Psoas muscle (tissue), 8 donors: ENCODE measurements at regions of chr14 and their contacts with region 1.

Region 1: DNA sequence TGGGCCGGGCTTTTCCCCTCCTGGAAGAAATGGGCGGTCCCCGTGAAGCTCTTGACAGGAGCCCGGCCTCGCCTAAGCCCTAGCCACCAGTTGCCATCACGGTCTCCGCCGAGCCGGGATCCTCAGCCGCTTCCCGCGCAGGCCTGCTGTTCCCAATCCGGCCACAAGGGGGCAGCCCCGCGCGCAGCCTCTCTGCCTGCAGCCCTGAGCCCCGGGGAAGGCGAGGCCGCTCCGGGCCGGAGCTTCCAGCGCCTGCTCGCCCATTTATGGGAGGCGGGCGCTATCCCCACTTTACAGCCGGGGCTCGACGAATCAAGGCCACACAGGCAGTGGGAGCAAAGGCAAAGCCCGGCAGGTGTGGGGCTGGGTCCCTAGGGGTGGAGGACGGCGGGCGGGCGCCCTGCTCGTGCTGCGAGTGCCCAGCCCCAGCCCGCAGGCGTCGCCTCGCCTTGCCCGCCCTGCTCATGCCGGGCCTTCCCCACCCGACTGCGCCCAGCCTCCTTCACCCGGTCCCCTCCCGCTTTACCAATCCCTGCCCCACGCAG is 61.5 kb downstream of the LGMN start:
- DNase-seq: peak; percentile 77 to 80
- ATAC-seq: peak; percentile 77 to 90 (median 84)
- H3K4me3 ChIP-seq: peak overlapping the region; percentile 49
- H3K27ac ChIP-seq: no peak overlapping the region
- H3K4me1 ChIP-seq: peaks cover 3% of the 10 kb centered on the region
- H3K27me3 ChIP-seq: no peaks in the 10 kb centered on the region
- CTCF ChIP-seq: peak; percentile 98

Region 2: GRCh38 chr14:92121670-92122350 is 565.2 kb before region 1 on chr14 and contains the starts of genes CPSF2 and NDUFB1:
- intact Hi-C with region 1: loop called in 1 of 2 experiments (anchors 10 kb)
- DNase-seq: peak; percentile 87 to 93
- ATAC-seq: peak; percentile 90 to 93 (median 92)
- H3K4me3 ChIP-seq: peak within 1 kb of the TSS; percentile 88
- H3K27ac ChIP-seq: peak within 1 kb of the TSS; percentile 96
- H3K4me1 ChIP-seq: peaks cover 45% of the 10 kb centered on the region
- H3K27me3 ChIP-seq: no peaks in the 10 kb centered on the region
- CTCF ChIP-seq: no peak
- total RNA-seq, gene CPSF2: 53.4 to 69.0 (median 63.3) TPM
- total RNA-seq, gene NDUFB1: 201 to 306 (median 238) TPM

Region 3: DNA sequence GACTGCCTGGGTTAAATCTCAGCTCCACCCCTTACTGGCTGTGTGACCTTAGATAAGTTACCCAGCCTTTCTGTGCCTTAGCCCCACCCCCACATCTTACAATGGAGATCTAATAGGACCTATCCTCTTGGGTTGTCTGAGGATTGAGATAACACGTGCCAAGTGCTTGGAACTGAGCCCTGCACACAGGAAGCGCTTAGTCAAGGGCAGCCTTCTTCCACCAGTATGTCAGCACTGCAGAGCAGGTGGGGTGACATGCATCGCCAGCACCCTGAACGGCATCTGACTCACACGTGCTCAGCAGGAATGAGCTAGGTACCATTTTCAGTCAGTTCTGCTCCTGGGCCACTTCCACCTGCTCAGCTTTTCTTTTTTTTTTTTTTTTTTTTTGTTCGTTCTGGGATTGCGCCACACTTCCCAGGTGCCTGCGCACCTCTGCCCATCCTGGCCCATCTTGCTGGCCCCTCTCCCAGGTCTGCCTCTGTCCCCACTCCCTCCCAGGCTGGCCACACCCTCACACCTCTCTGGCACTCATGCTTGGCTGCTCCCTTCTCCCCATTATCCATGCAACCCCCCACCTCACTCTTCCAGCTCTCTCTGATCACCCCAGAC is 41.9 kb after region 1 on chr14:
- intact Hi-C with region 1: no loop called
- DNase-seq: no peak
- ATAC-seq: peak; percentile 19 to 83 (median 62)
- H3K4me3 ChIP-seq: no peak overlapping the region
- H3K27ac ChIP-seq: no peak overlapping the region
- H3K4me1 ChIP-seq: peaks cover 12% of the 10 kb centered on the region
- H3K27me3 ChIP-seq: no peaks in the 10 kb centered on the region
- CTCF ChIP-seq: no peak

Region 4: DNA sequence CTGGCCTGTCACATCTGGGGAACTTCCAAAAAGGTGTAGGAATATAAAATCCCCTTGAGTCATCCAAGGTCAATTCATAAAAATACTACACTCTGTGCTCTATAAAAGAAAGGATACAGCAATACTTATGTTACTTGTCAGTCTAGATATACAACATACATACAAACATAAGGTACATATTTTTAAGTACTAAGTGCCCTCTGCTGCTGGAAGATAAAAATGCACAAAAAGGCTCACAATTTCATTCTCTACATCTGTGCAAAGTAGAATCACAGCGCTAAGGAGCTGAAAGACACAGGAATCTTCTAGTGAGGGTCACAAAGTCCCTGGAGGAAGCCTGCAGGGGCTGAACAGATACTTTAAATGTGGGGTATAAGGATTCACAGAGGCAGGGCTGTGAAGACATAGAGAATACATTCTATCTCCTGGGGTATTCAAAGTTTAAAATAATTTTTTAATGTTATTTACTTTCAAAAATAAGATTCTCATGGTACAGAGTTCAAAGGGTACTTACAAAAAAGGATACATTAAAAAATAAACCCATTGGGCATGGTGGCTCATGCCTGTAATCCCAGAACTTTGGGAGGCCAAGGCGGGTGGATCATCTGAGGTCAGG is 97.0 kb after region 1 on chr14:
- intact Hi-C with region 1: loop called in 1 of 2 experiments (anchors 1 kb)
- DNase-seq: no peak
- ATAC-seq: peak; percentile 58 to 83 (median 65)
- H3K4me3 ChIP-seq: no peak overlapping the region
- H3K27ac ChIP-seq: no peak overlapping the region
- H3K4me1 ChIP-seq: peaks cover 4% of the 10 kb centered on the region
- H3K27me3 ChIP-seq: no peaks in the 10 kb centered on the region
- CTCF ChIP-seq: peak; percentile 60